ENCODE measurements at regions of chr1 and their contacts with region 1.

Region 1: DNA sequence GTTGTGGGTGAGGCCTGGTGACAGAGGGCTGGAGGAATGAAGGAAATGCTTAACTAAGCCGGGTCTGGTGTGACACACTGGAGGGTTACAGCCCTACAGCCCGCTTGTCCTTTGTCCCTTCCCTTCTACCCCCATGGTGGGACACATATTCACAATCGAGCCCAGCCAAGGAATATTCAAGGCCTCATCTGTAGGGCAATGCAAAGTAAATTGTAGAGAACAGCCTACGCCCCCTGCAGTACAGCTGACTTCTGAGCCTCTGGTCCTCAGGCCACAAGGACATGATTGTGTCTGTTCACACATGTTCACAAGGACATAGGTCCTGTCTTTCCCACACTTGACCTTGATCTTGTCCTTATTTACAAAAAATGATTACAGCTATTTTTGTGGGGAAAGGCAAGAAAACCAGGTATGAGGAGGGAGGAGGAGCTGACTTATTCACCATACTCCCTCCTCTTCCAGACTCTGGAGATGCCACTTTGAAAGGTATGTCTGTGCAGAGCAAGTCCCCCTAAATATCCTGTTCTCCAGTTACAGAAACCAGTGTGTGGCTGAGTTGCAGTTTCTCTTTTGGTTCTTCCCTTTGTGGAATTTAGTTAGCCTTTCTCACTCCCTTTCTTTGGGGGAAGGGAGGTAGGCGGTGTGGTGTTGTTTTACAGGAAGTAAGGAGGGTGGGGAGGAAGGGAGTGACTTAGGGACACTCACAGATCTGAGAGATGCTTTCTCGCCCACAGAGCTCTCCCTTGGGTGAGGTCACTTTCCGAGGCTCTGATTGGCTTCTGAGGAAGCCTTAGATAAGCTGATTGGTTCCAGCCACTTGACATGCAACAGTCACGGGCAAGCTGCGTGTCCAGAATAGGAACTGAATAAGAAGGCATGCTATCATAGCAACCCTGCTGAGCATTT is 14.6 kb downstream of the POLR3GL start:
- DNase-seq: peak; percentile 81 to 98
- ATAC-seq: peak; percentile 91 to 94 (median 92)
- H3K4me3 ChIP-seq: peak overlapping the region in 8 of 10 donors; percentile 4 to 44 (median 38)
- H3K27ac ChIP-seq: peak overlapping the region; percentile 90 to 97 (median 94)
- H3K4me1 ChIP-seq: peaks cover 46 to 70% (median 68%) of the 10 kb centered on the region in 9 donors
- H3K27me3 ChIP-seq: no peaks in the 10 kb centered on the region
- CTCF ChIP-seq: peak in 5 of 9 donors; percentile 25 to 58 (median 45)

Region 2: GRCh38 chr1:145908653-145909052 is 70.5 kb before region 1 on chr1:
- intact Hi-C with region 1: no loop called
- DNase-seq: no peak
- ATAC-seq: no peak
- H3K4me3 ChIP-seq: no peak overlapping the region
- H3K27ac ChIP-seq: peak overlapping the region in 5 of 10 donors; percentile 31 to 77 (median 67)
- H3K4me1 ChIP-seq: peaks cover 0 to 34% (median 24%) of the 10 kb centered on the region in 9 donors
- H3K27me3 ChIP-seq: no peaks in the 10 kb centered on the region
- CTCF ChIP-seq: no peak

Region 3: DNA sequence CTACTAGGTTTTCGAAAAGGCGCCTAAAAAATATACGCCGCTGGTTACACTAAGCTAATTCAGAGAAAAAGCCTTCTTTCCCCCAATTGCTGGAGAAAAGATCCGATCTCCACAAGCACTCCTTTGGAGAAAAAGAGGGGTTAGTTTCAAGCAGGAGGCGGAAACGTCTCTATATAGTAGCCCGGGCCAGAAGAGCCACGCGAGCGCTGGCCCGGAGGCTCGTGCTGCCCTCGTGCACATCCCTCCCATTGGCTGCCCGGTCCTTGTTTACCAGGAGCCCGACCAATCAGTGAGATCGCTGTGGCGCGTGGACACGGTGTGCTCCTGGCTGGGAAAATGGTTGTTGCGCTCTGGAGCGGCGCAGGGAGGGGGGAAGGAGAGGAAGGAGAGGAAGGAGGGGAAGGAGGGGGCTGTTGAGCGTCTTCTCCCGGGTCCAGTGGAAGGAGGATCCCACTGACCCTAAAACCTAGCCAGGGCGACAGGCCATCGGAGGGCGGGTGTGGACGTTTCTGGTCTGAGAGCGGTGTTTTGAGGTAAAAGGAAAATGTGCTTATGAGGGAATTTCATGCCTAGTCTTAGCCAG is 17.4 kb after region 1 on chr1 and contains the start of gene TXNIP:
- intact Hi-C with region 1: loop called in 5 of 10 experiments (anchors 1 to 2 kb)
- DNase-seq: peak; percentile 99
- ATAC-seq: peak; percentile 90 to 95 (median 93)
- H3K4me3 ChIP-seq: peak within 1 kb of the TSS; percentile 70 to 90 (median 76)
- H3K27ac ChIP-seq: peak within 1 kb of the TSS; percentile 89 to 99 (median 97)
- H3K4me1 ChIP-seq: peaks cover 12 to 65% (median 52%) of the 10 kb centered on the region in 9 donors
- H3K27me3 ChIP-seq: no peaks in the 10 kb centered on the region
- CTCF ChIP-seq: no peak
- total RNA-seq, gene TXNIP: 544 to 1,142 (median 777) TPM

Region 4: DNA sequence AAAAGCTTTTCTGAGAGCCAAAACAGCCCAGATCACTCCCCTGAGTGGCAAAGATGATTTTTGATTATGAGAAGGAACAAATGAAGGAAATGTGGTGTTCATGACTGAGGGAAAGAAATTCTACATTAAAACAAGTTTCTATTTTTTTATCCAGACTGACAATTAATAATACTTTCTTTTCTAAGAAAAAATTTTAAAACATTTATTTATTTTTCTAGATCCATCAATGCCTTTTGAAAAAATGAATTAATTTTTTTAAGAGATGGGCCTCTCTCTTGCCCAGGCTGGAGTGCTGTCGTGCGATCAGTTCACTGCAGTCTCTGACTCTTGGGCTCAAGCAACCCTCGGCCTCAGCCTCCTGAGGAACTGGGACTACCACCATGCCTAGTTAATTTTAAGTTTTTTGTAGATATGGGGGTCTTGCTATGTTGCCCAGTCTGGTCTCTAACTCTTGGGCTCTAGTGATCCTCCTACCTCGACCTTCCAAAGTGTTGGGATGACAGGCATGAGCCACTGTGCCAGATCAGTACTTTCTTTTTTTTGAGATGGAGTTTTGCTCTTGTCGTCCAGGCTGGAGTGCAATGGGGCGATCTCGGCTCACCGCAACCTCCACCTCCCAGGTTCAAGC is 28.5 kb after region 1 on chr1:
- intact Hi-C with region 1: loop called (anchors 1 to 5 kb)
- DNase-seq: no peak
- ATAC-seq: peak in 2 of 8 donors; percentile 10 to 27
- H3K4me3 ChIP-seq: peak overlapping the region in 2 of 10 donors; percentile 26 to 42
- H3K27ac ChIP-seq: peak overlapping the region in 9 of 10 donors; percentile 29 to 91 (median 83)
- H3K4me1 ChIP-seq: peaks cover 0 to 47% (median 24%) of the 10 kb centered on the region in 9 donors
- H3K27me3 ChIP-seq: no peaks in the 10 kb centered on the region
- CTCF ChIP-seq: peak in 2 of 9 donors; percentile 5 to 39

Region 5: DNA sequence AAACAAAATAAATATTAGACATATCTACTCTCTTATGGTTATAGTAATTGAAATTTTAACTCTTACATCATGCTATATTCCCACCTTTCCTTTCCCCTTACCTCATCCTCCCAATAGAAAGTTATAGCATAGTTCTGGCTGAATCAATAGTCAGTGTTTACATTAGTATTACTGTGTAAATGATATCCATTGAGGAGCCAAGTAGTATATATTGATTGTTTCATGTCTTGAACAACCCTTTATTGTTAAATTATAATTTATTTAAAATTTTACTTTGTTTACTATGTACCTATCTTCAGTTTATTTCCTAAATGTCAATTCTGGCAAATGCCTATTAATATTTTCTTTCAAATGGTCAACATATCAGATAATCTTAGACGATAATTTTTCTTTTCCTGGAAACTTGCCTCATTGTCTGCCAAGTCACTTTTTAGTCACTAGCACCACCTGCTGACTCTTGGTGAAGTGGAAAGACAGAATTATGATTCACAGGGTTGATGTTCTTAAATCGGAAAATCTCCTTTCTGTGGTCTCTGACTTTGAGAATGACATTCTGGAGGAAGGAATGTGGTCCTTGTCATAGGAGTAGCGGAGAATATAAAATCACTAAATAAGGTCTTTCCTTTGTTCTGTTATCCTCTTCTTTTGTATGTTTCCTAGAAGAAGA is 33.8 kb after region 1 on chr1:
- intact Hi-C with region 1: loop called in 4 of 10 experiments (anchors 1 to 5 kb)
- DNase-seq: peak in 1 of 2 donors; percentile 60
- ATAC-seq: peak in 4 of 8 donors; percentile 40 to 59 (median 45)
- H3K4me3 ChIP-seq: no peak overlapping the region
- H3K27ac ChIP-seq: no peak overlapping the region
- H3K4me1 ChIP-seq: peaks cover 0 to 28% (median 14%) of the 10 kb centered on the region in 9 donors
- H3K27me3 ChIP-seq: peaks cover 0 to 2% (median 0%) of the 10 kb centered on the region in 7 donors
- CTCF ChIP-seq: peak; percentile 53 to 93 (median 81)

Measured in heart right ventricle (tissue), 16 donors.